Thyroid gland (tissue), 4 donors: ENCODE measurements at regions of chr11 and their contacts with region 1.

Region 1: DNA sequence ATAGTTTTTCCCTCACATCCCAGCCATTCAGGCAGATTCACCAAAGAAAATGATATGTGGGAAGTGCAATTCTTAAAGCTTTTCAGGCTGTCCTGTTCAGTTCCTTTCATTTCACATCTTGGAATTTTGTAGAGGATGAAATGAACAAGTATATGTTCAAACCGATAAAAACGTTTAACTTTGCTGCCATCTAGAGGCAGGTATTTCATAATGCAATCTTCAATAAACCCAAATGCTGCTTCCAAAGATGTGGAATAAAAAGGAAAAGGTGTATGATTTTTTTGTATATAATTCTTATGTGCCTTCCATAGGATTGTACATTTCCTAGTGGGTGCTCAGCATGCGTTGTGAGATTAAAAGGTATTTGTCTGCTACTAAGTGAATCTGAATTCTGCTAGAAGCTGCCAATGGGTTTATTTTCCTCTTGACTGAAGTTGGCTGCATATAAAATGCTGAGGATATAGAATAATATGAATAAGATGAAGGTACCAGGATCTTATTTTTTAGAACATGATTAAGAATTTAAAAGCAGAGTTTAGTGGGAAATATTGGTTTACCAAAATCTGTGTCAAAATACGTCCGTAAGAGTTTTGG is 199.3 kb downstream of the PGR start:
- DNase-seq: no peak
- H3K4me3 ChIP-seq: no peak overlapping the region
- H3K27ac ChIP-seq: no peak overlapping the region
- H3K4me1 ChIP-seq: no peaks in the 10 kb centered on the region
- H3K27me3 ChIP-seq: no peaks in the 10 kb centered on the region
- CTCF ChIP-seq: peak in 5 of 6 experiments; percentile 38 to 75 (median 59)
- POLR2A ChIP-seq: no peak

Region 2: DNA sequence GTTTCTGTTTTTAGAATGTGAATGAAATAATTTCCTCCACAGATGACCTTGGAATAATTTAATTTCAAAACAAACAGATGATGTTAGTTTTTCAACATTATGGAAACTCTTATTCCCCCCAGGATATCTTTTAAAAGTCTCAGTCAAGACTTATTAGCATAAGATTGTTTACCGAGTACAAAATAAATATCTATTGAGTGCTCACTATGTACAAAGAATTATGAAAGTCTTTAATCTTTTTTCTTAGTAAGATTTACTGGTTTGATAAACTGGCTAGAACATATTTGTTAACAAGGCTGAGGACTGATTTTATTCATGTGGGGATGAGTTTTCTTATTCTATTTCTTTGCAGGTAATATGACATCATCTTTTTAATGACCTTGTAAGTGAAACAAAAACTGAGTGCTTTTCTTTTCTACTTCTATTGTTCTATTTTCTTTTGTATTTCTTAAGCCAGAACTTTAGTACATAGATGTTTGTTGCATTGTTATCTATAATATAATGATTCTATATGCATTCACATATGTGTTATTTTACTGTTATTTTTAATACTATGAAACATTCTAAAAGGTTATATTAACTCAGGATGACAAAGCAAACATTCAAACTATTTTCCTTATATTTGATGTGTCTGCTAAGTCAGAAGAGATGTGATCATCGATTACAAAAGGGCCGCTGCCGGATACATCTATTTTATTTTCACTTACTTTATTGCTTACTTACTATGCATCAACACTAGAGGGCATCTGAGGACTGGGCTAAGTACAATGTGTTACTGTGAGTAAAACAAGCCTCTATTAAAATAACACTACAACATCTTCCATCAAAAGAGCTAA is 354.2 kb before region 1 on chr11:
- intact Hi-C with region 1: loop called (anchors 10 kb)
- DNase-seq: peak in 1 of 2 donors; percentile 6
- H3K4me3 ChIP-seq: no peak overlapping the region
- H3K27ac ChIP-seq: no peak overlapping the region
- H3K4me1 ChIP-seq: no peaks in the 10 kb centered on the region
- H3K27me3 ChIP-seq: no peaks in the 10 kb centered on the region
- CTCF ChIP-seq: peak in 5 of 6 experiments; percentile 57 to 84 (median 74)
- POLR2A ChIP-seq: no peak

Region 3: DNA sequence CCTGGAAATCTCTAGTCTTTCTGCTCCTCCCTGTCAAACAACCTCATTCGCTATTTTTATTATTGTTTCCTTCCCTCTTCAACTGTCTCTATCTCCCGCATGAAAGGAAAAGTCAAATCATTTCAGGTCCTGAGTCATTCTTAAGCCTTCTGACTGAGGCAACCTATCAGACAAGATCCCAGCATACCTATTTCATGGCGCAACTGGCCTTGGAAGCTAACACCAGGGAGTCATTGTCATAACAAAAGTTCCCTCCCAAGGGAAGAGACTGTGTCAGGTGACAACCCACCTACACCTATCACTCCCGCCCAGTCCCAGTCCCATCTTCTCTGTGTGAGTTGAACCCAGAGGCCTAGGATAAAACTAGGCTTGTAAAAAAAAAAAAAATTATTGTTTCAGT is 253.4 kb before region 1 on chr11:
- intact Hi-C with region 1: loop called (anchors 10 kb)
- DNase-seq: no peak
- H3K4me3 ChIP-seq: no peak overlapping the region
- H3K27ac ChIP-seq: no peak overlapping the region
- H3K4me1 ChIP-seq: no peaks in the 10 kb centered on the region
- H3K27me3 ChIP-seq: no peaks in the 10 kb centered on the region
- CTCF ChIP-seq: no peak
- POLR2A ChIP-seq: no peak

Region 4: GRCh38 chr11:100855466-100856067 is 74.7 kb before region 1 on chr11:
- intact Hi-C with region 1: loop called (anchors 5 kb)
- DNase-seq: no peak
- H3K4me3 ChIP-seq: no peak overlapping the region
- H3K27ac ChIP-seq: no peak overlapping the region
- H3K4me1 ChIP-seq: peaks cover 0 to 3% of the 10 kb centered on the region in 2 donors
- H3K27me3 ChIP-seq: no peaks in the 10 kb centered on the region
- CTCF ChIP-seq: peak; percentile 27 to 82 (median 58)
- POLR2A ChIP-seq: no peak

Region 5: DNA sequence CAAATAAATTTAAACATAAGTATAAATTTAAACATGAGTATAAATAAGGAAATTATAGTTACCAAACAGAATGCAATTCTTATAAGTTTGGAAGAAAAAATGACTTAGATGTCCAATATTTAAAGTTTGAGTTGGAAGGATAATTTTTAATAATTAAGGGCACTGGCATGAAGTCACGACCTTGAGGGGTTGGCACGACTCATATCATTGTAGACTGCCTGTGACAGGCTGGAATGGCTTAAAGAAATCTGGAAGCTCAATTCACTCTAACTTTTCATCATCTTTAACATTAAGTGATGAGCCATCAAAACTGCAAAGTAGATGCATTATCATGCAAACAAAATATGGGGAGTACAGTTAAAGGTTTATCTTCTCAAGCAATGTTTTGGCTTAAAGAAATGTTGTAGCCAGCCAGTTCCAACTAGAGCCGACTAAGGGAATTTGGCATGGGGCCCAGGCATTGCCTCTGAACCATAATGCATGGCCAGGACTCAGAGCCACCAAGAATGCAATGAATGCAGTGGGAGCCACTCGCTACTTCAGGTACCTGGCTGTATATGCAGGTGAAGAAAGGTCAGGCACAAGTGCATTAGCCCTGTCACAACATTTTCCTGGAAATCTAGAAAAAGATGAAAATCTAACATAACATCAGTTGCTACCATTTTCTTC is 165.9 kb after region 1 on chr11:
- intact Hi-C with region 1: no loop called
- DNase-seq: peak; percentile 15 to 21
- H3K4me3 ChIP-seq: no peak overlapping the region
- H3K27ac ChIP-seq: no peak overlapping the region
- H3K4me1 ChIP-seq: no peaks in the 10 kb centered on the region
- H3K27me3 ChIP-seq: no peaks in the 10 kb centered on the region
- CTCF ChIP-seq: no peak
- POLR2A ChIP-seq: no peak